Esophagus squamous epithelium (tissue), 5 donors: ENCODE measurements at regions of chr21 and their contacts with region 1.

Region 1: DNA sequence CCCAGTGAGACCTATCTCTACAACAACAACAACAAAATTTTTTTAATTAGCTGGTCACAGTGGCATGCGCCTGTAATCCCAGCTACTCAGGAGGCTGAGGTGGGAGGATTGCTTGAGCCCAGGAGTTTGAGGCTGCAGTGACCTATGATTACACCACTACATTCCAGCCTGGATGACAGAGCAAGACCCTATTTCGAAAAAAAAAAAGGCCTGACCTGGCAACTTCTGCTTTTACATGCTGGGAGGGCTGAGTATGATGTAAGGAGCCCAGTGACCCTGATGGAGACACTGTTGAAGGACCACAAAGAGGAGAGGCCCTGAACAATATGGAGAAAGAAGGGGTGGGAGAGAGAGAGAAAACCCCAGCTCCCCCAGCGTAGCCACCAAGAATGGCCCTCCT is 9.2 kb upstream of the VPS26C start:
- DNase-seq: no peak
- H3K4me3 ChIP-seq: no peak overlapping the region
- H3K27ac ChIP-seq: no peak overlapping the region
- H3K4me1 ChIP-seq: peaks cover 0 to 3% (median under 1%) of the 10 kb centered on the region in 3 donors
- H3K27me3 ChIP-seq: no peaks in the 10 kb centered on the region
- CTCF ChIP-seq: no peak
- POLR2A ChIP-seq: no peak

Region 2: GRCh38 chr21:37398697-37399096 is 122.3 kb after region 1 on chr21:
- intact Hi-C with region 1: loop called (anchors 5 kb)
- DNase-seq: no peak
- H3K4me3 ChIP-seq: no peak overlapping the region
- H3K27ac ChIP-seq: no peak overlapping the region
- H3K4me1 ChIP-seq: peaks cover 0 to 68% (median 14%) of the 10 kb centered on the region in 3 donors
- H3K27me3 ChIP-seq: no peaks in the 10 kb centered on the region
- CTCF ChIP-seq: no peak
- POLR2A ChIP-seq: no peak

Region 3: DNA sequence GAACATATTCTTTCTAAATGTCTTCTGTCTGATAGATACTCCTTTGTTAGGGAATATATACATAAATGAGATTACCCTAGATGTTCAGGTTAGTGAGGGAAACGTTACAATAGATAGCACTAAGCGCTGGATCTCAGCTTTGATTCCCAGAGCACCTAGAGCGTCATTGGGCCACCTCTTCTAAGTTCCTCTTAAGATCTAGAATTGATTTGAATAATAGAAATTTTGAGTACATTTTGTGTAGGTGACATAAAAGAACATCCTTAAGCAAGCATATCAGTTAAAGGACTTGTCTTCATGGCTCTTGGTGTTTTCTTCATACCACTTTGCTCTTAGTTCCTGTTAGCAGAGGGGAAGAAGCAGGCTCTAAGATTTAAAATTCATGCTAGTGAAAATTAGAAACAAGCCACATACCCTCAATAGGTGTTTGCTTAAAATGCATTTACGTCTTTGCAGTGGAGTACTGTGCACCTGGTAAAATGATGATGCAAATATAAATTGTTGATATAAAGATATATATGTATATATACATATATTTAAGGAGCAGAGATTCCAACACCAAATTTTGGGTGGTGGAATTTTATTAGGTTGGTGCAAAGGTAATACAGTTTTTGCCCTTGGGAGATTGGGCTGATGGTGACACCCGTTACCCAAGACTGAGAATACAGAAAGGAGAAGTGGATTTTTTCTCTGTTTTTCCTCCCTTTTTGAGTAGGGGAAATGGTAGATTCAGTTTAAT is 137.3 kb after region 1 on chr21:
- intact Hi-C with region 1: no loop called
- DNase-seq: no peak
- H3K4me3 ChIP-seq: no peak overlapping the region
- H3K27ac ChIP-seq: no peak overlapping the region
- H3K4me1 ChIP-seq: peaks cover 0 to 86% (median 14%) of the 10 kb centered on the region in 3 donors
- H3K27me3 ChIP-seq: no peaks in the 10 kb centered on the region
- CTCF ChIP-seq: no peak
- POLR2A ChIP-seq: no peak

Region 4: DNA sequence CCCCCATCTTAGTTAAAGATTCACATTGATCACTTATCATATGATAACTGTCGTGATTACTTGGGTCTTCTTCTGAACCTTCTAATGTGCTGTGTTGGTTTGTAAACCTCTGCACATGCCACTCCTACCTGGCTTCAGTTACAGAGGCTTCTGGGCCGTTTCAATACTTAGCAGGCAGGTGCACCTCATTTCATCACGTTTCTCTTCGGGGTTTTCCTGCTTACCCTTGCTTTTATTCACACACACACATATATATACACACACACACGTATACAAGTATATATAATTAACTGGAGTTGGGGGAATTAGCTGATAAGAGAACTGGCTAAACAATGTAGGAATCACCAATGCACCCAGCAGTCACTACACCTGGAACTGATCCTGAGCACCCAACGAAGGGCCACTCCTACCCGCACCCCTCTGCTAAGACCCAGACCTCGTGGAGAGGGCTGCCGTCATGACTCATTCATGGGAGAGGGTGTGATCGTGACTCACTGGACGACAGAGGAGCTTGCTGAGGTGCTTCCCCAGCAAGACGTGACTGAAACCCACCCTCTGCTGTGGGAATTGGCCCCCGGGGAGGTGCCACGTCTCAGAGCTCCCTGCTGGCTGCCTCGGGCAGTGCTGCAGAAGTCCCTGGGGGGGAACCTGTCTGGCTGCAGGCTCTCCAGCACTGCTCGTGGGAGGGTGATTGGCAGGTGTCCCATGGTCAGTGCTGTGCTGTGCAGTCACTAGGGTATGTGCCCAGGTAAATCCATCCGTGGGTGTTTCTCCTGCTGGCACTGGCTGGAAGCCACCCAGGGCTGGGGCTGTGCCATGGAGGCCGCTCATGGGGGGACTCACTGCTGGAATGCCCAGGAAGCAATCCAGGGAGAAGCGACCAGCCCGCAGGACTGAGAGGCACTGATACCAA is 256.7 kb after region 1 on chr21:
- intact Hi-C with region 1: no loop called
- DNase-seq: no peak
- H3K4me3 ChIP-seq: peak overlapping the region in 1 of 4 donors; percentile 15
- H3K27ac ChIP-seq: peak overlapping the region in 2 of 4 donors; percentile 6 to 15
- H3K4me1 ChIP-seq: peaks cover 8 to 27% (median 9%) of the 10 kb centered on the region in 3 donors
- H3K27me3 ChIP-seq: peaks cover 0 to 38% (median 0%) of the 10 kb centered on the region in 4 donors
- CTCF ChIP-seq: peak in 1 of 6 experiments; percentile 21
- POLR2A ChIP-seq: no peak